Caco-2 (cell line): ENCODE measurements at regions of chr10 and their contacts with region 1.

Region 1: DNA sequence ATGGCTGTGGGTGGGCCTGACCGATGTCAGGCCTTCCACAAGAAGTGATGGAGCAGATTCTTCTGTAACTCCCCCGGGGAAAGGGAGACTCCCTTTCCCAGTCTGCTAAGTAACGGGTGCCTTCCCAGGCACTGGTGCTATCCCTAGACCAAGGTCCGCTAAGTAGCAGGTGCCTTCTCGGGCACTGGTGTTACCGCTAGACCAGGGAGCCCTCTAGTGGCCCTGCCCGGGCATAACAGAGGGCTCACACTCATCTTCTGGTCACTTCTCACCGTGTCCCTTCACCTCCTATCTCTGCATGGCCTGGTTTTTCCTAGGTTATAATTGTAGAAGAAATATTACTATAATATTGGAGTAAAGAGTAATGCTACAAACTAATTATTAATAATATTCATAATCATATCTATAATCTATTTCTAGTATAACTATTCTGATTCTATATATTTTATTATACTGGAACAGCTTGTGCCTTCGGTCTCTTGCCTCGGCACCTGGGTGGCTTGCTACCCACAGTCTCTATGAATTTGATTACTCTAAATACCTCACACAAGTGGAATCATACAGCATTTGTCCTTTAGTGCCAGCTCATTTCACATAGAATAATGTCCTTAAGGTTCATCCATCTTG is 1378.7 kb downstream of the XPNPEP1 start:
- DNase-seq: peak; percentile 66 to 81
- H3K4me3 ChIP-seq: no peak overlapping the region
- H3K4me3 Mint-ChIP-seq: no peak overlapping the region
- H3K27ac Mint-ChIP-seq: no peak overlapping the region
- H3K4me1 ChIP-seq: no peaks in the 10 kb centered on the region
- H3K4me1 Mint-ChIP-seq: no peaks in the 10 kb centered on the region
- H3K27me3 ChIP-seq: no peaks in the 10 kb centered on the region
- H3K27me3 Mint-ChIP-seq: no peaks in the 10 kb centered on the region
- CTCF ChIP-seq: peak; percentile 93 to 97

Region 2: DNA sequence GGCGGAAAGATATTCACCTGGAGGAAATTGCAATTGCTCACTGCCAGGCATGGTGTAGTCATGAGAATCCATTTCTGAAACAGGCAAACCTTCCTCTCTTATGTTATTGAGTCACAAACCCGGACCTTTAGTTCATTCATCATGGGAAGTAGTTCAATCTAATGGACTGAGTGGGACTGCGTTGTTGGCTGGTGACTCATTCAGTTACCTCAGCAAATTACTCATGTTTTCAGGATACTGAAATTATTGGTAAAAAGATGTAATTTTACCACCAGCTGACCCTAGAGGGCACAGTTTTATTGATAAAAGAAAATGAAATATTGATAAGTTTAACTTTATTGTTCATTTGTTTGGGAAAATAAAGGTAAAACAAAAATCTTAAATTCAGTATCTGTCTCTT is 185.7 kb before region 1 on chr10:
- CTCF ChIA-PET with region 1: no interaction called
- POLR2A ChIA-PET with region 1: no interaction called
- intact Hi-C with region 1: loop called (anchors 5 kb)
- DNase-seq: no peak
- H3K4me3 ChIP-seq: no peak overlapping the region
- H3K4me3 Mint-ChIP-seq: no peak overlapping the region
- H3K27ac Mint-ChIP-seq: no peak overlapping the region
- H3K4me1 ChIP-seq: peaks cover 9% of the 10 kb centered on the region; the same call in 1 of the 2 replicates
- H3K4me1 Mint-ChIP-seq: peaks cover 14% of the 10 kb centered on the region
- H3K27me3 ChIP-seq: no peaks in the 10 kb centered on the region
- H3K27me3 Mint-ChIP-seq: peaks cover 2% of the 10 kb centered on the region
- CTCF ChIP-seq: no peak

Region 3: GRCh38 chr10:108410236-108410635 is 134.4 kb before region 1 on chr10:
- CTCF ChIA-PET with region 1: no interaction called
- POLR2A ChIA-PET with region 1: no interaction called
- intact Hi-C with region 1: no loop called
- DNase-seq: no peak
- H3K4me3 ChIP-seq: no peak overlapping the region
- H3K4me3 Mint-ChIP-seq: no peak overlapping the region
- H3K27ac Mint-ChIP-seq: peak overlapping the region; percentile 1
- H3K4me1 ChIP-seq: no peaks in the 10 kb centered on the region
- H3K4me1 Mint-ChIP-seq: peaks cover 17% of the 10 kb centered on the region
- H3K27me3 ChIP-seq: no peaks in the 10 kb centered on the region
- H3K27me3 Mint-ChIP-seq: no peaks in the 10 kb centered on the region
- CTCF ChIP-seq: no peak

Region 4: GRCh38 chr10:108629834-108630233 is 85.2 kb after region 1 on chr10:
- CTCF ChIA-PET with region 1: no interaction called
- POLR2A ChIA-PET with region 1: no interaction called
- intact Hi-C with region 1: loop called (anchors 1 kb)
- DNase-seq: peak; percentile 27 to 34
- H3K4me3 ChIP-seq: no peak overlapping the region
- H3K4me3 Mint-ChIP-seq: no peak overlapping the region
- H3K27ac Mint-ChIP-seq: no peak overlapping the region
- H3K4me1 ChIP-seq: peaks cover 7% of the 10 kb centered on the region; the same call in 1 of the 2 replicates
- H3K4me1 Mint-ChIP-seq: no peaks in the 10 kb centered on the region
- H3K27me3 ChIP-seq: no peaks in the 10 kb centered on the region
- H3K27me3 Mint-ChIP-seq: peaks cover 2% of the 10 kb centered on the region
- CTCF ChIP-seq: peak in 1 of 2 experiments; percentile 16

Region 5: GRCh38 chr10:109427411-109427810 is 882.8 kb after region 1 on chr10:
- CTCF ChIA-PET with region 1: no interaction called
- POLR2A ChIA-PET with region 1: no interaction called
- intact Hi-C with region 1: loop called (anchors 10 kb)
- DNase-seq: peak in 1 of 2 experiments; percentile 12
- H3K4me3 ChIP-seq: no peak overlapping the region
- H3K4me3 Mint-ChIP-seq: no peak overlapping the region
- H3K27ac Mint-ChIP-seq: no peak overlapping the region
- H3K4me1 ChIP-seq: no peaks in the 10 kb centered on the region
- H3K4me1 Mint-ChIP-seq: no peaks in the 10 kb centered on the region
- H3K27me3 ChIP-seq: no peaks in the 10 kb centered on the region
- H3K27me3 Mint-ChIP-seq: no peaks in the 10 kb centered on the region
- CTCF ChIP-seq: peak; percentile 17 to 29